GM13977 (cell line): ENCODE measurements at regions of chr3 and their contacts with region 1.

Region 1: GRCh38 chr3:25648107-25648535 is 16.6 kb downstream of the TOP2B start:
- DNase-seq: peak; percentile 51
- CTCF ChIP-seq: peak; percentile 90

Region 2: DNA sequence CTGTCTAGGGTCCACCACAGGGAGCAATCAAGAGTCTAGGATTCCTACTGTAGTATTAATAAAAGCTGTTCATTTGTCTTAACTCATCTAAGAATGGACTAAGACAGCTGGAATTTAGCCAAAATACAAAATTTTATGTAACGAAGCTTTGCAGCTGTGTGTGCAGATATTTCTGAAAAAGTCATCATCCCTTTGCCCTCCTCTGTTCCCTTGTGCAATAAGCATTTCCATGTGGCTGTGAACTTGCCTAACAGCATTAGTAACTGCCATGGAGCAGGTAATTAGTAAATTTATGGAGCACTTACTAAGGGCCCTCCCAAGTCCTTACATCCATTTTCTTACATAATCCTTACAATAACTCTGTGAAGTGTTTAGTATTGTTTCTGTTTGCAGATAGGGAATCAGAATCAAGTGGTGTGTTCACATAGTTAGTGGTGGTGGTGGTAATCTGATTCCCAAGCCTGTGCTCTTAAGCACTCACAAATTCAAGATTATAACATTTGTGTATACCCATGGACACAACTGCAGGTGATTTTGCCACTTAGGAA is 105.6 kb before region 1 on chr3:
- in situ Hi-C with region 1: no loop called
- DNase-seq: no peak
- CTCF ChIP-seq: no peak

Region 3: DNA sequence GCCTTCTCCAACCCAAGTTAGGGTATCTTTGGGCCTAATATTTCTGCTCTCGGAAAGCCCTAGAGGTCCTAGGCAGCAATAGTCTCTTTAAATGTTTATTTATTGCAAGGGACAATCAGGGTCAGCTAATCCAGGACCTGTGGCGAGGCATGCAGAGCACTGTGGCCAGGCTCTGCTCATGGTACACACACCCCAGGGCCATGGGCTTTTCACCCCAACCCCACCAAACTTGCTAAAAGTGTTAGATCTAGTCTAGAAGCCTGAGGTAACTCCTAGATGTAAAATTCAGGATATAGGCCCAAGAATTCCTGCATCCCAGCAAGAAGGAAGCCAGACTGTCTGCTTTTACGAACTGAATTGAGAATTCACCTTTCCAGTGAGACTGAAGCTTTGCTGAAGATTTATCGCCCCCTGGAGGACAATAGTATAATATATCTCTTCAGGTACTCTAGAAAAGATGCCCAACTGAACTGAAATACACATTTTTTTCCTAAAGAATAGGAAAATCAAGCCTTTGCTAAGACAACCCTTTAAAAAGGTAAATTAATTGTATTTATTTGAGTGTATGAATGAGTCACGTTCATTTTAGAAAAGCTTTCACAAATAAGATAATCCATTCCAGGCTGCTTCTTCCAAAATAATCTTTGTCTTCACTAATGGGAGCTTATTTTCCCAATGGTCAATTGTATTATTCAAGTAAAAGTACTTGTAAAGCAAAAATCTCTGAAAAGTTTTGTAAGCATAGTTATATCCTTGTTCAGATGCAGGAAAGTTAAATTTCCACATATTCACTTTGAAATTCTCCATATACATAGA is 1064.3 kb after region 1 on chr3:
- in situ Hi-C with region 1: loop called (anchors 25 kb)
- DNase-seq: peak; percentile 30
- CTCF ChIP-seq: peak; percentile 67